CD8-positive, alpha-beta T cell (primary cell): ENCODE measurements at regions of chr3 and their contacts with region 1.

Region 1: GRCh38 chr3:153161138-153161713 is 800 bp upstream of the RAP2B start:
- DNase-seq: peak; percentile 79 to 97 (median 90)
- ATAC-seq: peak; percentile 78
- H3K4me3 ChIP-seq: peak overlapping the region; percentile 69 to 75
- H3K4me3 Mint-ChIP-seq: peak overlapping the region; percentile 99
- H3K27ac ChIP-seq: peak overlapping the region; percentile 62 to 74
- H3K27ac Mint-ChIP-seq: peak overlapping the region; percentile 95
- H3K4me1 ChIP-seq: peaks cover 24% of the 10 kb centered on the region
- H3K4me1 Mint-ChIP-seq: peaks cover 34% of the 10 kb centered on the region
- H3K27me3 ChIP-seq: no peaks in the 10 kb centered on the region
- H3K27me3 Mint-ChIP-seq: no peaks in the 10 kb centered on the region
- CTCF ChIP-seq: no peak

Region 2: GRCh38 chr3:151203051-151203420 is 1958.2 kb before region 1 on chr3 and contains the start of gene GPR171:
- CTCF ChIA-PET with region 1: no interaction called
- POLR2A ChIA-PET with region 1: no interaction called
- intact Hi-C with region 1: loop called in 1 of 2 experiments (anchors 10 kb)
- DNase-seq: peak; percentile 46 to 91 (median 68)
- ATAC-seq: peak; percentile 84
- H3K4me3 ChIP-seq: peak within 1 kb of the TSS; percentile 50 to 59
- H3K4me3 Mint-ChIP-seq: peak within 1 kb of the TSS; percentile 76
- H3K27ac ChIP-seq: peak within 1 kb of the TSS; percentile 36 to 72
- H3K27ac Mint-ChIP-seq: peak within 1 kb of the TSS; percentile 91
- H3K4me1 ChIP-seq: peaks cover 67% of the 10 kb centered on the region
- H3K4me1 Mint-ChIP-seq: peaks cover 81% of the 10 kb centered on the region
- H3K27me3 ChIP-seq: no peaks in the 10 kb centered on the region
- H3K27me3 Mint-ChIP-seq: no peaks in the 10 kb centered on the region
- CTCF ChIP-seq: no peak
- total RNA-seq, gene GPR171: 11.5 to 13.4 TPM

Region 3: GRCh38 chr3:153138276-153139210 is 22.7 kb before region 1 on chr3:
- CTCF ChIA-PET with region 1: interaction called, 4 read pairs
- POLR2A ChIA-PET with region 1: no interaction called
- intact Hi-C with region 1: loop called in 1 of 2 experiments (anchors 2 kb)
- DNase-seq: peak in 1 of 9 experiments; percentile 35
- ATAC-seq: no peak
- H3K4me3 ChIP-seq: no peak overlapping the region
- H3K4me3 Mint-ChIP-seq: no peak overlapping the region
- H3K27ac ChIP-seq: no peak overlapping the region
- H3K27ac Mint-ChIP-seq: no peak overlapping the region
- H3K4me1 ChIP-seq: no peaks in the 10 kb centered on the region
- H3K4me1 Mint-ChIP-seq: peaks cover 1% of the 10 kb centered on the region
- H3K27me3 ChIP-seq: no peaks in the 10 kb centered on the region
- H3K27me3 Mint-ChIP-seq: peaks cover 4% of the 10 kb centered on the region
- CTCF ChIP-seq: no peak

Region 4: GRCh38 chr3:153291056-153291685 is 129.9 kb after region 1 on chr3:
- CTCF ChIA-PET with region 1: interaction called, 109 read pairs
- POLR2A ChIA-PET with region 1: interaction called, 28 read pairs
- intact Hi-C with region 1: loop called (anchors 1 to 2 kb)
- DNase-seq: peak in 2 of 9 experiments; percentile 44 to 57
- ATAC-seq: no peak
- H3K4me3 ChIP-seq: no peak overlapping the region
- H3K4me3 Mint-ChIP-seq: no peak overlapping the region
- H3K27ac ChIP-seq: no peak overlapping the region
- H3K27ac Mint-ChIP-seq: no peak overlapping the region
- H3K4me1 ChIP-seq: peaks cover 11% of the 10 kb centered on the region
- H3K4me1 Mint-ChIP-seq: peaks cover 38% of the 10 kb centered on the region
- H3K27me3 ChIP-seq: no peaks in the 10 kb centered on the region
- H3K27me3 Mint-ChIP-seq: no peaks in the 10 kb centered on the region
- CTCF ChIP-seq: no peak

Region 5: GRCh38 chr3:153621953-153622352 is 460.7 kb after region 1 on chr3:
- CTCF ChIA-PET with region 1: interaction called, 3 read pairs
- POLR2A ChIA-PET with region 1: interaction called, 10 read pairs
- intact Hi-C with region 1: loop called in 1 of 2 experiments (anchors 10 kb)
- DNase-seq: peak in 2 of 9 experiments; percentile 23 to 35
- ATAC-seq: peak; percentile 41
- H3K4me3 ChIP-seq: no peak overlapping the region
- H3K4me3 Mint-ChIP-seq: peak overlapping the region; percentile 12
- H3K27ac ChIP-seq: peak overlapping the region in 1 of 2 experiments; percentile 26
- H3K27ac Mint-ChIP-seq: peak overlapping the region; percentile 49
- H3K4me1 ChIP-seq: peaks cover 36% of the 10 kb centered on the region
- H3K4me1 Mint-ChIP-seq: peaks cover 44% of the 10 kb centered on the region
- H3K27me3 ChIP-seq: no peaks in the 10 kb centered on the region
- H3K27me3 Mint-ChIP-seq: no peaks in the 10 kb centered on the region
- CTCF ChIP-seq: no peak

Region 6: GRCh38 chr3:154323891-154324738 is 1162.9 kb after region 1 on chr3 and contains the start of gene DHX36:
- CTCF ChIA-PET with region 1: no interaction called
- POLR2A ChIA-PET with region 1: no interaction called
- intact Hi-C with region 1: loop called (anchors 2 to 5 kb)
- DNase-seq: peak; percentile 85 to 97 (median 92)
- ATAC-seq: peak; percentile 81
- H3K4me3 ChIP-seq: peak within 1 kb of the TSS; percentile 64 to 76
- H3K4me3 Mint-ChIP-seq: peak within 1 kb of the TSS; percentile 96
- H3K27ac ChIP-seq: peak within 1 kb of the TSS; percentile 97
- H3K27ac Mint-ChIP-seq: peak within 1 kb of the TSS; percentile 99
- H3K4me1 ChIP-seq: peaks cover 45% of the 10 kb centered on the region
- H3K4me1 Mint-ChIP-seq: peaks cover 33% of the 10 kb centered on the region
- H3K27me3 ChIP-seq: no peaks in the 10 kb centered on the region
- H3K27me3 Mint-ChIP-seq: no peaks in the 10 kb centered on the region
- CTCF ChIP-seq: no peak
- total RNA-seq, gene DHX36: 149 to 152 TPM